Calu3 (cell line): ENCODE measurements at regions of chr10 and their contacts with region 1.

Region 1: GRCh38 chr10:23525406-23525805 is 86.5 kb downstream of the OTUD1 start:
- DNase-seq: peak; percentile 46
- H3K4me3 Mint-ChIP-seq: no peak overlapping the region
- H3K27ac Mint-ChIP-seq: no peak overlapping the region
- H3K4me1 Mint-ChIP-seq: peaks cover 31% of the 10 kb centered on the region
- H3K27me3 Mint-ChIP-seq: peaks cover under 1% of the 10 kb centered on the region
- CTCF ChIP-seq: peak; percentile 44

Region 2: GRCh38 chr10:23158370-23158769 is 367.0 kb before region 1 on chr10:
- CTCF ChIA-PET with region 1: interaction called, 3 read pairs
- intact Hi-C with region 1: loop called (anchors 2 kb)
- DNase-seq: peak; percentile 54
- H3K4me3 Mint-ChIP-seq: no peak overlapping the region
- H3K27ac Mint-ChIP-seq: no peak overlapping the region
- H3K4me1 Mint-ChIP-seq: no peaks in the 10 kb centered on the region
- H3K27me3 Mint-ChIP-seq: peaks cover 47% of the 10 kb centered on the region
- CTCF ChIP-seq: peak; percentile 87

Region 3: DNA sequence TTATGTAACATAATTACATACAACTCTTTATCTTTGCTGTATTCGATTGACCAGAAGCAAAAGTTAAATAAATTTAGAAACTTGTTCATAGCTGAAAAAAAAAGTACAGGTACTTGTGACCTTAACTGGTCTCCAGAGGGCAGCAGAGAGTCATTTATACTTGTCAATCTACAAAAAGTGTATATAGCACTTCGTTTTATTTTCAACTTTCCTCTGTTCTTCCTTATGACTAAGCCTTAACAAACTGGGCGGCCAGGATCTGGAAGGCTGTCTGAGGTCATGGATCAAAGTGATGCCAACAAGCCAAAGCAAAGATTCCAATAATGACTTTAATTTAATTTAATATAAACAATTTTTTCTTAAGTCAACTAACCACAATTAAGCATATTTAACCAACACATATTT is 210.6 kb before region 1 on chr10:
- CTCF ChIA-PET with region 1: interaction called, 9 read pairs
- intact Hi-C with region 1: loop called (anchors 1 kb)
- DNase-seq: peak; percentile 67
- H3K4me3 Mint-ChIP-seq: no peak overlapping the region
- H3K27ac Mint-ChIP-seq: no peak overlapping the region
- H3K4me1 Mint-ChIP-seq: no peaks in the 10 kb centered on the region
- H3K27me3 Mint-ChIP-seq: no peaks in the 10 kb centered on the region
- CTCF ChIP-seq: peak; percentile 34

Region 4: GRCh38 chr10:23461557-23461956 is 63.8 kb before region 1 on chr10:
- CTCF ChIA-PET with region 1: no interaction called
- intact Hi-C with region 1: loop called (anchors 5 kb)
- DNase-seq: no peak
- H3K4me3 Mint-ChIP-seq: no peak overlapping the region
- H3K27ac Mint-ChIP-seq: no peak overlapping the region
- H3K4me1 Mint-ChIP-seq: peaks cover 16% of the 10 kb centered on the region
- H3K27me3 Mint-ChIP-seq: no peaks in the 10 kb centered on the region
- CTCF ChIP-seq: no peak

Region 5: DNA sequence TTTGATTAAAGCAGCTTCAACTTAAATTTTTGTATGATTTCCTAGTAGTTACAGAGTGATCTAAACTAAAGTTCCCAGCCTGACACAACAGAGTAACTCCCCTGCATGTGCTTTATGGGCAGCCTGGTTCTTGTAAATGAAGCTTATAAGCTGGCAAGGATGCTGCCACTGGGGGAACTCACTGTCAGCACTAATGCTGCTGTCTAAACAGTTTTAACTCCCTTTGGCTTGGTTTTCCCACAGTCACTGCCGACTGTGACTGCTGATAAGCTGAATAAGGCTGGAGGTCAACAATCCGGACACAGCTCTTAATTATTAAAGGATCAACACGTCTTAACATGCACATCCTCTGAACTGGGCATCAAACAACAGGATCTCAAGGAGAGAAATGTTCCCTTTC is 43.6 kb after region 1 on chr10:
- CTCF ChIA-PET with region 1: no interaction called
- intact Hi-C with region 1: no loop called
- DNase-seq: no peak
- H3K4me3 Mint-ChIP-seq: no peak overlapping the region
- H3K27ac Mint-ChIP-seq: no peak overlapping the region
- H3K4me1 Mint-ChIP-seq: no peaks in the 10 kb centered on the region
- H3K27me3 Mint-ChIP-seq: peaks cover 24% of the 10 kb centered on the region
- CTCF ChIP-seq: no peak

Region 6: DNA sequence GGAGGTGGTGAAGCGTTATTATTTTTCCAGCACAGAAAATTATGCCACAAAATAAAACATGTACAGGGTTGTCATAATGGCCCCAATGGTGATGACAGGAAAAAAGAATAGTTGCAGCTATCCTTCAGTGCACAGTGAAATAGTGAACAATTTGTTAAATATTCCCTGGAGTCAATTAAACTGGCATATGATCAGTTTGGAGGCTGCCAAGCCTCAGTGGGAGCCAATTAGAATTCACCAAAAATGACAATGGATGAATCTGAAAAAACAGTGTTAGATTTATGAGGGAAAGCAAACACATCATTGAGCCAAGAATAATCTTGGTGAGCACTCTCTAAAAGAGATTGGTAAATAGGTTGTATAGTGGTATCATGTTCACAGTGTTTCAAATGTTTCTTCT is 59.8 kb after region 1 on chr10:
- CTCF ChIA-PET with region 1: no interaction called
- intact Hi-C with region 1: no loop called
- DNase-seq: no peak
- H3K4me3 Mint-ChIP-seq: no peak overlapping the region
- H3K27ac Mint-ChIP-seq: no peak overlapping the region
- H3K4me1 Mint-ChIP-seq: no peaks in the 10 kb centered on the region
- H3K27me3 Mint-ChIP-seq: no peaks in the 10 kb centered on the region
- CTCF ChIP-seq: no peak

Region 7: GRCh38 chr10:23694446-23694920 is 169.1 kb after region 1 on chr10:
- CTCF ChIA-PET with region 1: no interaction called
- intact Hi-C with region 1: no loop called
- DNase-seq: no peak
- H3K4me3 Mint-ChIP-seq: peak overlapping the region; percentile 72
- H3K27ac Mint-ChIP-seq: no peak overlapping the region
- H3K4me1 Mint-ChIP-seq: peaks cover 8% of the 10 kb centered on the region
- H3K27me3 Mint-ChIP-seq: peaks cover 88% of the 10 kb centered on the region
- CTCF ChIP-seq: no peak

Region 8: DNA sequence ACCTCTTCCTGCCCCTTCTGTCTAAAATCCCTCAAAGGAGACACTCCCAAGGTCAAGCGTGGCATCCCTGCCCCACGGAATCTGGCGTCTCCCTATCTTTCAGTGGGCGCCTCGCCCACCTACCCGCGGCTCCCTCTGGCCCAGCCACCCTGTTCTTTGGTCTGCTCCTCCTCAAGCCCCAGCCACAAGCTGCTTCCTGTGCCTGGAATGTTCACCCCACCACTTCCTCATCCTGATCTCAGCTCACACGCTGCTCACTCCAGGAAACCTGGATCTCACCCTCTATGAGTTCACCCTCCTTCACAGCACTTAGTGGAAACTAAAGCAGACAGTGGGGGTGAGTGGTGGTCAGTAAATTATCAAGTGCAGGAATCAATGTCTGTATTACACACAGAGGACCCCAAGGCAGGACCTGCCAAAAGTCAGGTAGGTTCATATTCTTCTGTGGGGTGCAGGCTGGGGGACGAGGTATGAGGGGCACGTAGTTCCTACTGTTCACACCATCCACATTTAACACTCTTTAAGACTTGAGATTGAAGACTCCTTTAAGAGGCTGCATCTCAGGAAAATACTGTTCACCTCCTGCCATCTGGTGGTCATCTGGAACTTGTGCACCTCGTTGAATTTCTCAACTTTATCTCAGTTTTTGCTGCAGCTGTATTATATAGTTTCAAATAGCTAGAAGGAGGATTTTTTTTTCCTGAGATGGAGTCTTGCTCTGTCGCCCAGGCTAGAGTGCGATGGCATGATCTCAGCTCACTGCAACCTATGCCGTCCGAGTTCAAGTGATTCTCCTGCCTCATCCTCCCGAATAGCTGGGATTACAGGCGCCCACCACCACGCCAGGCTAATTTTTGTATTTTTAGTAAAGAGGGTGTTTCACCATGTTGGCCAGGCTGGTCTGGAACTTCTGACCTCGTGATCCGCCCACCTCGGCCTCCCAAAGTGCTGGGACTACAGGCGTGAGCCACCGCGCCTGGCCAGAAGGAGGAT is 1031.6 kb after region 1 on chr10:
- CTCF ChIA-PET with region 1: no interaction called
- intact Hi-C with region 1: loop called (anchors 10 kb)
- DNase-seq: peak; percentile 52
- H3K4me3 Mint-ChIP-seq: peak overlapping the region; percentile 5
- H3K27ac Mint-ChIP-seq: peak overlapping the region; percentile 34
- H3K4me1 Mint-ChIP-seq: peaks cover 27% of the 10 kb centered on the region
- H3K27me3 Mint-ChIP-seq: no peaks in the 10 kb centered on the region
- CTCF ChIP-seq: peak; percentile 64